Naive thymus-derived CD4-positive, alpha-beta T cell (primary cell): ENCODE measurements at regions of chr7 and their contacts with region 1.

Region 1: GRCh38 chr7:88111136-88111743 is 108.6 kb downstream of the SRI start:
- DNase-seq: peak in 5 of 9 donors; percentile 2 to 27 (median 18)
- ATAC-seq: peak; percentile 45
- H3K4me3 ChIP-seq: no peak overlapping the region
- H3K4me3 Mint-ChIP-seq: no peak overlapping the region
- H3K27ac ChIP-seq: no peak overlapping the region
- H3K27ac Mint-ChIP-seq: no peak overlapping the region
- H3K4me1 ChIP-seq: no peaks in the 10 kb centered on the region
- H3K4me1 Mint-ChIP-seq: peaks cover 0 to 4% (median 0%) of the 10 kb centered on the region in 7 donors
- H3K27me3 ChIP-seq: no peaks in the 10 kb centered on the region
- H3K27me3 Mint-ChIP-seq: no peaks in the 10 kb centered on the region

Region 2: GRCh38 chr7:87312215-87312865 is 798.9 kb before region 1 on chr7:
- CTCF ChIA-PET with region 1: no interaction called
- POLR2A ChIA-PET with region 1: no interaction called
- intact Hi-C with region 1: loop called in 1 of 2 experiments (anchors 2 kb)
- DNase-seq: peak; percentile 25 to 70 (median 55)
- ATAC-seq: peak; percentile 98
- H3K4me3 ChIP-seq: no peak overlapping the region
- H3K4me3 Mint-ChIP-seq: no peak overlapping the region
- H3K27ac ChIP-seq: no peak overlapping the region
- H3K27ac Mint-ChIP-seq: no peak overlapping the region
- H3K4me1 ChIP-seq: peaks cover 0 to 4% of the 10 kb centered on the region in 2 donors
- H3K4me1 Mint-ChIP-seq: peaks cover 0 to 3% (median 0%) of the 10 kb centered on the region in 7 donors
- H3K27me3 ChIP-seq: no peaks in the 10 kb centered on the region
- H3K27me3 Mint-ChIP-seq: peaks cover 0 to 12% (median 0%) of the 10 kb centered on the region in 5 donors

Region 3: GRCh38 chr7:87506246-87507180 is 604.7 kb before region 1 on chr7:
- CTCF ChIA-PET with region 1: interaction called, 4 read pairs
- POLR2A ChIA-PET with region 1: no interaction called
- intact Hi-C with region 1: loop called in 1 of 2 experiments (anchors 2 kb)
- DNase-seq: peak in 3 of 9 donors; percentile 4 to 14 (median 12)
- ATAC-seq: no peak
- H3K4me3 ChIP-seq: no peak overlapping the region
- H3K4me3 Mint-ChIP-seq: no peak overlapping the region
- H3K27ac ChIP-seq: no peak overlapping the region
- H3K27ac Mint-ChIP-seq: no peak overlapping the region
- H3K4me1 ChIP-seq: no peaks in the 10 kb centered on the region
- H3K4me1 Mint-ChIP-seq: peaks cover 0 to 16% (median 0%) of the 10 kb centered on the region in 7 donors
- H3K27me3 ChIP-seq: no peaks in the 10 kb centered on the region
- H3K27me3 Mint-ChIP-seq: no peaks in the 10 kb centered on the region

Region 4: DNA sequence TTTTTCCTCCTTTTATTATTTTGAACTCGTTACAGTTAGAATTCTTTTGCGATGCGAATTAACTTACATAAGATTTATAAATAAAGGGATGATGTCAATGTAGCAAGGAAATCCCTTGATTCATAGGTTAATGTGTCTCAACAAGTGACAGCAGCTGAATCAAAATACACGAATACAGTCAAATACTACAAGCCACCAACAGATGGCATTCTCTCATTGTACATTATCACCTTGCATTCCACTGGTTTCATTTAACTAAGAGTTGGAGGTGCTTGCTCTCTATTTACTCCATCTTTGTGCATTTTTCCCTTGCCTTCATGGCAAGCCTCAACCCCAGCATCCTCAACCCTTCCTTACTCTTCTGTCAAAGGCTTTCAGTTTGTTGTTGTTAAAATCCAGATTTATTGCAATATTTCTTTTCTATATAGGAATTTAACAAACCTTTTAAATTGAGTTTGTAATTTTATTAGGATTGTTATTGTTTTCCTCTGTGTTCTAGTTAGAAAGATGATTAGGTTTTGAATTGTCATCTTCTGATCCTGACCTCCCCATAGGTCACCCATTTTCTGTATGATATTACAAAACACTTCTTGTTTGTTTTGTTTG is 313.3 kb before region 1 on chr7:
- CTCF ChIA-PET with region 1: interaction called, 7 read pairs
- POLR2A ChIA-PET with region 1: no interaction called
- intact Hi-C with region 1: loop called (anchors 1 kb)
- DNase-seq: peak in 7 of 9 donors; percentile 11 to 49 (median 38)
- ATAC-seq: peak; percentile 77
- H3K4me3 ChIP-seq: no peak overlapping the region
- H3K4me3 Mint-ChIP-seq: no peak overlapping the region
- H3K27ac ChIP-seq: no peak overlapping the region
- H3K27ac Mint-ChIP-seq: no peak overlapping the region
- H3K4me1 ChIP-seq: no peaks in the 10 kb centered on the region
- H3K4me1 Mint-ChIP-seq: peaks cover 0 to 2% (median 0%) of the 10 kb centered on the region in 7 donors
- H3K27me3 ChIP-seq: no peaks in the 10 kb centered on the region
- H3K27me3 Mint-ChIP-seq: peaks cover 7 to 19% (median 18%) of the 10 kb centered on the region in 5 donors

Region 5: GRCh38 chr7:87810130-87810529 is 301.1 kb before region 1 on chr7:
- CTCF ChIA-PET with region 1: no interaction called
- POLR2A ChIA-PET with region 1: no interaction called
- intact Hi-C with region 1: no loop called
- DNase-seq: no peak
- ATAC-seq: no peak
- H3K4me3 ChIP-seq: no peak overlapping the region
- H3K4me3 Mint-ChIP-seq: no peak overlapping the region
- H3K27ac ChIP-seq: no peak overlapping the region
- H3K27ac Mint-ChIP-seq: no peak overlapping the region
- H3K4me1 ChIP-seq: no peaks in the 10 kb centered on the region
- H3K4me1 Mint-ChIP-seq: no peaks in the 10 kb centered on the region
- H3K27me3 ChIP-seq: peaks cover 0 to 3% of the 10 kb centered on the region in 2 donors
- H3K27me3 Mint-ChIP-seq: peaks cover 0 to 12% (median 0%) of the 10 kb centered on the region in 5 donors

Region 6: GRCh38 chr7:87933945-87934698 is 177.1 kb before region 1 on chr7 and contains the start of gene ADAM22:
- CTCF ChIA-PET with region 1: no interaction called
- POLR2A ChIA-PET with region 1: no interaction called
- intact Hi-C with region 1: loop called in 1 of 2 experiments (anchors 1 kb)
- DNase-seq: peak; percentile 49 to 80 (median 74)
- ATAC-seq: peak; percentile 96
- H3K4me3 ChIP-seq: peak within 1 kb of the TSS; percentile 80
- H3K4me3 Mint-ChIP-seq: peak within 1 kb of the TSS; percentile 84 to 93 (median 91)
- H3K27ac ChIP-seq: peak within 1 kb of the TSS; percentile 19
- H3K27ac Mint-ChIP-seq: peak within 1 kb of the TSS in 7 of 9 donors; percentile 13 to 82 (median 65)
- H3K4me1 ChIP-seq: peaks cover 4 to 6% of the 10 kb centered on the region in 2 donors
- H3K4me1 Mint-ChIP-seq: peaks cover 0 to 21% (median 12%) of the 10 kb centered on the region in 7 donors
- H3K27me3 ChIP-seq: no peaks in the 10 kb centered on the region
- H3K27me3 Mint-ChIP-seq: peaks cover 0 to 54% (median 4%) of the 10 kb centered on the region in 5 donors
- total RNA-seq, gene ADAM22: 1.1 to 7.1 (median 3.1) TPM